Head of caudate nucleus (tissue), 42 donors: ENCODE measurements at regions of chr4 and their contacts with region 1.

Region 1: DNA sequence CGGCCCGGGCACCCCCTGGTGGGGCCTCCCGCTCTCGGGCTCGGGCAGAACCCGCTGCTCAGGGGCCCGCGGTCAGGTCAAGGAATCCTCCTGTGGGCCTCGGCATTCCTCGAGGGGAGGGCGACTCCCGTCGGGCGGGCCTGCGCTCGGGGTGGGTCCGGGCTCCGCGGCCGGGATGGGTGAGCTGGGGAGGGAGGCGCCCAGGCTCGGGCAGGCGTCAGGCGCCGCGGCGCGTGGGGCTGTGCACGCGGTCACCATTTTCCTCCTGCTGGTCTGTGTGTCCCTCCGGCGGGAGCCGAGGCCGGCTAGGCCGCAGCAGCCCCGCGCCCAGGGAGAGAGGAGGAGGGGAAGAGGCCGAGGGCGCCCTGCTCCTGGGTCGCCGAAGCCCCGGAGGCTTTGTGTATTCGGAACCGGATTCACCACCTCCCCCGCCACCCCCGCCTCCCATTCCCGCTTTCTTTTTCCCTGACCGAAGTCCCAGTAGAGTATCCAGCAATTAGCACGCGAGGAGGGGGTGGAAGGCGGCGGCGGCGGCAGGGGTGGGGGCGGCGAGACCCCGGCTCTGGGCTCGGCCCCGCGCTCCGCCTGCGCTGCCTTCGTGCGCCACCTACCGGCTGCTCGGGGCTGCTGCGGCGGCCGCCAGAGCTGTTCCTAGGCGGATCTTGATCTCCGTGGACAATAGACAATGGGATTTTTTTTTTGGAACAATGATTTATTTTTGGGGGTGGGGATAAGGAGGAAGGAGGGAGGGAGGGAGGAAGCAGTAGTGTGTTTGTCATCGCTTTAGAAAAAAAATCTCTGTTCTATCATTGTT is 99.0 kb upstream of the MAML3 start:
- DNase-seq: peak; percentile 62 to 94 (median 86)

Region 2: GRCh38 chr4:139734875-139735380 is 518.0 kb before region 1 on chr4:
- intact Hi-C with region 1: loop called (anchors 5 kb)
- DNase-seq: peak; percentile 68 to 96 (median 91)

Region 3: GRCh38 chr4:139857021-139857420 is 395.9 kb before region 1 on chr4:
- intact Hi-C with region 1: no loop called
- DNase-seq: no peak

Region 4: DNA sequence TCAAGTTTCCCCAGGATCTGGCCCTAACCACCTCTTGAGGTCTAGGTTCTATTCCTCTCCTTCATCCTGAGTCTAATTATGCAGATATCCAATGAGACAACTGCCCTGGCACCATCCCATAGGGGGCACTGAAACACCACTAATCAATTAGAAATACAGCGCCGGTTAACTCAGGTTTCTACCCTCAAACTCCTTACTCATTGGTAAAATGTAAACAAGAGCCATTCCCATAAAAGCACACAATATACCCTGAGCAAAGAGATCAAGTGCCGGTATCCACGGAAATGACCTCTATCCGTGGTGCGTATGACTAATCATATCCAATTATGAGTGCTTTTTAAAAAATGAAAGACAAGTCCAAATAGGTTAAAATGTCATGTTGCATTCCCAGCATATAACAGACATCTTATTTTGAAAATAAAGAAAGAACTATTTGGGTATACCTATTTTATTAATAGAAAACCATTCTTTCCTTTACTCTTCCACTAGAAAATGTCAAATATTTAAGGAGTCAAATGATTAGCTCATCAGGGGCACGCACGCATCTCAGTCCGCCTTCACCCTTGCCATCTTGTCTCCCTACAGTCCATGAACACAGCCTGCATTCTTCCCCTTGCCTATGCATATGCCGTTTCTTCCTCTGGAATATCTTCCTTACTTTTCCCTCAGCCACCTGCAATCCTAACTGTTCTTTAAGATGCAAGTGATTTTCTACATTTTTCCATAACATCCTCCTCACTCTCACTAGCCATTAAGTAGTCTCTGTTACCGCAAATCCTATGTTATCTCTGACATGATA is 240.1 kb before region 1 on chr4:
- intact Hi-C with region 1: loop called (anchors 5 kb)
- DNase-seq: peak in 41 of 42 donors; percentile 31 to 88 (median 70)

Region 5: GRCh38 chr4:140326395-140326993 is 73.5 kb after region 1 on chr4:
- intact Hi-C with region 1: loop called (anchors 5 kb)
- DNase-seq: peak in 33 of 42 donors; percentile 11 to 82 (median 52)